Cardiac septum (tissue), 1 donor: ENCODE measurements at regions of chr1 and their contacts with region 1.

Region 1: GRCh38 chr1:153946622-153947241 is at the start of gene DENND4B:
- DNase-seq: peak; percentile 93
- total RNA-seq, gene DENND4B: 42.7 TPM

Region 2: DNA sequence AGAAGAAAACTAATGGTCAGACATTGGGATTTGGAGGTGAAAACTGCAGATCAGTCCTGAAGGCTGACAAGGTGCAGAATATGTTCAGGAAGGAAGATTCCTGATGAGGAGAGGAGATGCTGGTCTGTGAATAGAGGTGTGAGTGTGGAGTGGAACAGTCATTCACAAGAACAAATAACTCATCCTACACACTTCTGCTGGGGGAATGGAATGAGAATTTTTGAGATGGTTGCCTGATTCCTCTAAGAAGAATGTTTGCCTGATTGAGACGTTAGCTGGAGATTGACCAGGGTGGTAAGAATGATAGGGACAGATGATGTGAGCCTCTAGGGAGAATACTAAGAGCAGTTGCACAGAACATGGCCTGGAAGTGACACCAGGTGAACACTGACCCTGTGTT is 490.3 kb before region 1 on chr1:
- intact Hi-C with region 1: no loop called
- DNase-seq: no peak

Region 3: GRCh38 chr1:153796791-153797659 is 149.7 kb before region 1 on chr1:
- intact Hi-C with region 1: loop called (anchors 2 kb)
- DNase-seq: peak; percentile 83

Region 4: GRCh38 chr1:153816283-153816889 is 130.3 kb before region 1 on chr1:
- intact Hi-C with region 1: loop called (anchors 2 kb)
- DNase-seq: no peak

Region 5: GRCh38 chr1:153958111-153958960 is 11.6 kb after region 1 on chr1 and contains the start of gene CRTC2:
- intact Hi-C with region 1: loop called (anchors 2 kb)
- DNase-seq: peak; percentile 99
- total RNA-seq, gene CRTC2: 20.6 TPM